B cell (primary cell): ENCODE measurements at regions of chr1 and their contacts with region 1.

Region 1: DNA sequence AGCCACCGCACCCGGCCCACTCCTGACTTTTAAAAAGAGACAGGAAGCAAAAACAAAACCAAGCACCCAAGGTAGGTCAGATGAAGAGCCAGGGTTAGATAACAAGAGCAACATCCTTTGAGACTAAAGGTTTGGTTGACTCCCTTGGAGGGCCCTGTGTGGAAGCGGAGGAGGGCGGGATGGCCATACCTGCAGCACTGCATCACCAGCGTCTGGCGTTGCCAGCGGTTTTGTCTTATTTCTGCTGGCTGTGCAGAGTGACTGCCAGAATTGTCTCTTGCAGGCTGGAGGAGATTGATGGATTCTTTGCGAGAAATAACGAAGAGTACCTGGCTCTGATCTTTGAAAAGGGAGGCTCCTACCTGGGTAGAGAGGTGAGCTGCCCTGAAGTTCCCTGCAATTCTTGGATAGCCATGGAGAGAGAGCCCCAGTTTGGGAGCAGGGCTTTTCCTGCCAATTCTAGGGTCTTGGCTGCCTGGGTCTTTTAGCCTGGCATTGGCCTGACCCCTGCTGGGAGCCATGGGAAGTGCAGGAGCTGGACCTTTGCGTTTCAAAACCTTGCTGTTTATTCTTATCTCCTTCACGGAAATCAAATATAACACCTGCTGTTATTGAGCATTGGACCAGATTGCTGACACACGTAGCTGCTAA is 24.0 kb downstream of the QSOX1 start:
- DNase-seq: peak; percentile 69
- ATAC-seq: peak; percentile 74
- H3K4me3 ChIP-seq: no peak overlapping the region
- H3K4me3 Mint-ChIP-seq: no peak overlapping the region
- H3K27ac ChIP-seq: no peak overlapping the region
- H3K27ac Mint-ChIP-seq: no peak overlapping the region
- H3K4me1 ChIP-seq: no peaks in the 10 kb centered on the region
- H3K4me1 Mint-ChIP-seq: no peaks in the 10 kb centered on the region
- H3K27me3 ChIP-seq: no peaks in the 10 kb centered on the region
- H3K27me3 Mint-ChIP-seq: no peaks in the 10 kb centered on the region
- CTCF ChIP-seq: peak; percentile 96

Region 2: DNA sequence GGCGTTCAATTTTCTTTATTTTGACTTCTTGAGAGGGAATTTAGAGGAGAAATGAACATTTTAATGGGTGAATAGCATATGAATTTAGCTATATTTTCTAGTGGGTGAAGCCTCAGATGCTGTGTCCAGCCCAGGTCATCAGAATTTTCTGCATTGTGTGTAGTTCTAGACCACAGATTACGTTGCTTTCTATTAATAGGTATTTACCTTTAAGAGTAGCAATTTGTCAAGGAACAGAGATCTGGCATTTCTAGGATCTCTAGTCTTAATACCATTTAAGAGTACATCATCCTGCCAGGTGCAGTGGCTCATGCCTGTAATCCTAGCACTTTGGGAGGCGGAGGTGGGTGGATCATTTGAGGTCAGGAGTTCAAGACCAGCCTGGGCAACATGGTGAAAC is 566.3 kb before region 1 on chr1:
- CTCF ChIA-PET with region 1: no interaction called
- POLR2A ChIA-PET with region 1: no interaction called
- intact Hi-C with region 1: no loop called
- DNase-seq: no peak
- ATAC-seq: no peak
- H3K4me3 ChIP-seq: no peak overlapping the region
- H3K4me3 Mint-ChIP-seq: no peak overlapping the region
- H3K27ac ChIP-seq: no peak overlapping the region
- H3K27ac Mint-ChIP-seq: no peak overlapping the region
- H3K4me1 ChIP-seq: no peaks in the 10 kb centered on the region
- H3K4me1 Mint-ChIP-seq: no peaks in the 10 kb centered on the region
- H3K27me3 ChIP-seq: peaks cover 0 to 13% (median 0%) of the 10 kb centered on the region in 4 experiments
- H3K27me3 Mint-ChIP-seq: peaks cover 35% of the 10 kb centered on the region
- CTCF ChIP-seq: no peak

Region 3: GRCh38 chr1:179706339-179706941 is 472.2 kb before region 1 on chr1:
- CTCF ChIA-PET with region 1: interaction called, 45 read pairs
- POLR2A ChIA-PET with region 1: no interaction called
- intact Hi-C with region 1: no loop called
- DNase-seq: peak; percentile 44
- ATAC-seq: no peak
- H3K4me3 ChIP-seq: no peak overlapping the region
- H3K4me3 Mint-ChIP-seq: no peak overlapping the region
- H3K27ac ChIP-seq: no peak overlapping the region
- H3K27ac Mint-ChIP-seq: no peak overlapping the region
- H3K4me1 ChIP-seq: no peaks in the 10 kb centered on the region
- H3K4me1 Mint-ChIP-seq: peaks cover 3% of the 10 kb centered on the region
- H3K27me3 ChIP-seq: peaks cover 0 to 3% (median 0%) of the 10 kb centered on the region in 4 experiments
- H3K27me3 Mint-ChIP-seq: peaks cover 25% of the 10 kb centered on the region
- CTCF ChIP-seq: peak; percentile 76

Region 4: GRCh38 chr1:179867807-179868330 is 310.8 kb before region 1 on chr1:
- CTCF ChIA-PET with region 1: interaction called, 106 read pairs
- POLR2A ChIA-PET with region 1: no interaction called
- intact Hi-C with region 1: loop called (anchors 1 kb)
- DNase-seq: peak; percentile 69
- ATAC-seq: peak; percentile 71
- H3K4me3 ChIP-seq: no peak overlapping the region
- H3K4me3 Mint-ChIP-seq: no peak overlapping the region
- H3K27ac ChIP-seq: no peak overlapping the region
- H3K27ac Mint-ChIP-seq: peak overlapping the region; percentile 3
- H3K4me1 ChIP-seq: peaks cover 5 to 6% of the 10 kb centered on the region in 2 donors
- H3K4me1 Mint-ChIP-seq: peaks cover 21% of the 10 kb centered on the region
- H3K27me3 ChIP-seq: no peaks in the 10 kb centered on the region
- H3K27me3 Mint-ChIP-seq: no peaks in the 10 kb centered on the region
- CTCF ChIP-seq: peak; percentile 80

Region 5: DNA sequence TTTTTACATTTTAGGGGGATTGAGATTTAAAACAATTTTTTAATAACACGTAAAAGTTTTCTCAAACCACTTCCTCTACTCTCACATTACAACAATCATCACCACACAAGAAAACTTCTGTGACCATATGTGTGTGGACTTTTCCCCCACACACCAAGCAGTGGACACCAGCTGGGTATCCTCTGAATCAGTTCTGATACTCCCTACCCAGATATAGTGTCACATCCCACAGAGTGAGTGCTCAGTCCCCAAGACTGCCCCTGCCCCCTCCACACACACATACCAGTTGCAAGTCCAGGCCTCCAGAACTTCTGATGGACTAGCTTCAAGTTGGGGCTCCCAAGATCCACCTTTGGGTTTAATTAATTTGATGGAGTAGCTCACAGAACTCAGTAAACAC is 77.2 kb before region 1 on chr1:
- CTCF ChIA-PET with region 1: interaction called, 18 read pairs
- POLR2A ChIA-PET with region 1: no interaction called
- intact Hi-C with region 1: no loop called
- DNase-seq: no peak
- ATAC-seq: no peak
- H3K4me3 ChIP-seq: no peak overlapping the region
- H3K4me3 Mint-ChIP-seq: no peak overlapping the region
- H3K27ac ChIP-seq: no peak overlapping the region
- H3K27ac Mint-ChIP-seq: no peak overlapping the region
- H3K4me1 ChIP-seq: no peaks in the 10 kb centered on the region
- H3K4me1 Mint-ChIP-seq: no peaks in the 10 kb centered on the region
- H3K27me3 ChIP-seq: no peaks in the 10 kb centered on the region
- H3K27me3 Mint-ChIP-seq: no peaks in the 10 kb centered on the region
- CTCF ChIP-seq: no peak

Region 6: GRCh38 chr1:180198196-180198595 is 19.6 kb after region 1 on chr1:
- CTCF ChIA-PET with region 1: interaction called, 12 read pairs
- POLR2A ChIA-PET with region 1: no interaction called
- intact Hi-C with region 1: no loop called
- DNase-seq: no peak
- ATAC-seq: no peak
- H3K4me3 ChIP-seq: no peak overlapping the region
- H3K4me3 Mint-ChIP-seq: no peak overlapping the region
- H3K27ac ChIP-seq: no peak overlapping the region
- H3K27ac Mint-ChIP-seq: no peak overlapping the region
- H3K4me1 ChIP-seq: no peaks in the 10 kb centered on the region
- H3K4me1 Mint-ChIP-seq: no peaks in the 10 kb centered on the region
- H3K27me3 ChIP-seq: no peaks in the 10 kb centered on the region
- H3K27me3 Mint-ChIP-seq: no peaks in the 10 kb centered on the region
- CTCF ChIP-seq: no peak

Region 7: GRCh38 chr1:180262572-180263488 is 84.2 kb after region 1 on chr1:
- CTCF ChIA-PET with region 1: no interaction called
- POLR2A ChIA-PET with region 1: no interaction called
- intact Hi-C with region 1: no loop called
- DNase-seq: no peak
- ATAC-seq: no peak
- H3K4me3 ChIP-seq: no peak overlapping the region
- H3K4me3 Mint-ChIP-seq: no peak overlapping the region
- H3K27ac ChIP-seq: no peak overlapping the region
- H3K27ac Mint-ChIP-seq: no peak overlapping the region
- H3K4me1 ChIP-seq: no peaks in the 10 kb centered on the region
- H3K4me1 Mint-ChIP-seq: no peaks in the 10 kb centered on the region
- H3K27me3 ChIP-seq: peaks cover 0 to 7% (median 0%) of the 10 kb centered on the region in 4 experiments
- H3K27me3 Mint-ChIP-seq: peaks cover 6% of the 10 kb centered on the region
- CTCF ChIP-seq: no peak